GM13976 (cell line): ENCODE measurements at regions of chr18 and their contacts with region 1.

Region 1: DNA sequence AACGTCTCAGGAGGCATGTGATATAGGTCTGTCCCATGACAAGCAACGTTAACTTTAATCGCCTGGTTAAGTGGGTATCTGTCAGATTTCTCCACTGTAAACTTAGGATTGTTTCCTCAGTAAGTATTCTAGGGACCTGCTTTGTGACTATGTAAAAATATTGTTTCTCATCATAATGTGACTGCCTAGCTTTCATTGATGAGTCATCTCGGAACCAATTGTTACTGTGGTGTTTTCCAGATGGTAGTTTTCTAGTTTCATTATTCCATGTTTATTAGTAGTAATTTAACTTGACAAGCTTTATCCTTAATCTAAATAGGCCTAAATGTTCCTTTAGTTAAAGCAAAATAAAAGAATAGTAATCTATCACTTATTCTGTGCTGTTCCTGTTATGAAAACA is 28.2 kb upstream of the GATA6 start:
- DNase-seq: no peak
- CTCF ChIP-seq: no peak

Region 2: GRCh38 chr18:21865043-21865442 is 276.2 kb before region 1 on chr18:
- in situ Hi-C with region 1: no loop called
- DNase-seq: no peak
- CTCF ChIP-seq: no peak

Region 3: DNA sequence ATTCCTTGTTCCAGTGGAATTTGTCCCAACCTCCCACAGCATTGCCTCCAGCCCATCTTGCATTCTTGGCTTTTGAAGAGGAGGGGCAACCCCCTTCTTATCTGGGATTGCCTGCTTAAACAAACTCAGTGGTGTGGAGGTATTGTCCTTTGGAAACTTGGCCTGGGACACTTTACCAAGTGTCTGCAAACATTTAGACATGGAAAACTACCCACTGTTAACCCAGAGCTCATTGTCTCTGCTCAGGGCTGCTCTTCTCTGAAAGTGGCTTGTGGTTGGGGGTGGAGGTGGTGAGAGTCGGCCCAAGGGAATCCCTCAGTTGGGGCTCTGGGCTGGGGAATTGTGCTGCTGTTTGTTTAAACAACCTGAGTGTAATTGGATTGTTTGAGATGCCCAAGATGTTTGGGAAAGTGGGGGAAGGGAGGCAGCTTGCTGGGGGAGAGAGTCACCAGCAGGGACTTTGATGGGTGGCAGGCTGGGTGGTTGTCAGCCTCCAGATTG is 150.1 kb before region 1 on chr18:
- in situ Hi-C with region 1: no loop called
- DNase-seq: no peak
- CTCF ChIP-seq: no peak

Region 4: DNA sequence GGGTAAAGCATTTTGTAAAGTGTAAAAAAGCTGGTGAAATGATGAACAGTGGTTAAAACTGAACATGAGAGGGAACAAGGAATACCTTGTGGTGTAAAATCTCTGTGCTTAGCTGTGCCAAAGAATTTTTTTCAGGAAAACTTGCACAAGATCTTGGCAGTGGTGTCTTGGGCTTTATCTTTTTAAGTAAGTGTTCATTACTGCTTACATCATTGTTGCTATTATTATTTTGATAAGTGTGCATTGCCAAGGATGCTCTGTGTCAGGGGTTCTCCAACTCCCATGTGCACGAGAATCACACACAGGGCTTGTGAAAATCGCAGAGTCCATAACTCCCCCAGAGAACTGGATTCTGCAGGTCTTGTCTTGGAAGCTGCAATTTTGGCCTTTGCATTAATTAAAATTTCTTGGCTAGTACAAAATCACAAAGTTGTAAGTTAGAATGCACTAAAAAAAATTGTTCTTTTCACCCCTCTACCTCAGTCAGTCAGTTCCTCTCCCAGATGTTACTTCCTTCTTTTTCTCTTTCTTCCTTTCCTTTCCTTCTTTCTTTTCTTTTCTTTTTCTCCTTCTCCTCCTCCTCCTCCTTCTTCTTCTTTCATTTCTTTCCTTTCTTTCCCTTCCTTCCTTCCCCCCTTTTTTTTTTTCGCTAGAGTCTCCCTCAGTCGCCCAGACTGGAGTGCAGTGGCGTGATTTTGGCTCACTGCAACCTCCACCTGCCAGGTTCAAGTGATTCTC is 66.0 kb after region 1 on chr18:
- in situ Hi-C with region 1: loop called (anchors 10 kb)
- DNase-seq: no peak
- CTCF ChIP-seq: no peak